Gastrocnemius medialis (tissue), 4 donors: ENCODE measurements at regions of chr12 and their contacts with region 1.

Region 1: GRCh38 chr12:123232807-123233543 is at the starts of genes MPHOSPH9 and MTRFR:
- DNase-seq: peak; percentile 100
- ATAC-seq: peak; percentile 96
- H3K4me3 ChIP-seq: peak within 1 kb of the TSS; percentile 88 to 96 (median 92)
- H3K27ac ChIP-seq: peak within 1 kb of the TSS; percentile 95 to 99 (median 97)
- H3K4me1 ChIP-seq: peaks cover 25 to 30% of the 10 kb centered on the region in 2 donors
- H3K27me3 ChIP-seq: no peaks in the 10 kb centered on the region
- CTCF ChIP-seq: peak in 1 of 5 experiments; percentile 10
- POLR2A ChIP-seq: peak; percentile 99 to 100
- total RNA-seq, gene MPHOSPH9: 8.5 to 35.4 (median 12.7) TPM
- total RNA-seq, gene MTRFR: 4.7 to 14.1 (median 5.6) TPM

Region 2: DNA sequence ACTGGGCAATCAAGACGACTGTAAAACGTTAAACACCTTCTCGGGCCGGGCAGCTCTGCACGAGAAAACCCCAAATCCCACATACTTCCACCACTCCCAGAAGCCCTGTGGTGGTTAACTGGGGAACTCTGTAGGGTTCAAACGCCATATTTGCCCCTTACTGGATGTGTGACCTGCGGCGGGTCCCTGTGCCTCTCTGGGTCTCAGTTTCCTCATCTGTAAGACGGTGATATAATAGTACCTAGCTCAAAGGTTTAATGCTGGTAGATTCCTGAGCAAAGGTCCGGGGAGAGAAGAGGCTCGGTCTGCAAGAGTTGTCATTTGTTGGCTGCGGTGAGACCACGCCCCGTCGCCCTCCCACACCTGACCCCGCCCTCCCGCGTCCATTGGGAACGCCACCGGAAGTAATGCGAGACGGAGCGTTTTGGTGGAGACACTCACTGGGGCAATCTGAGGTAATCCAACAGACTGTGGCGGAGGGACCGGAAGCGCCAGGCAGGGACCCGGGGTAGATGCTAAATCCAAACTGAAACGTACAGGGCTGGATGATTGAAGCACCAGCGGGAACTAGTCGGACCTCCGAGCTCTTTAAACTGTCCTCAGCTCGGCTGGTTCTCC is 258.6 kb before region 1 on chr12:
- in situ Hi-C with region 1: loop called in 1 of 4 experiments (anchors 10 kb)
- intact Hi-C with region 1: loop called (anchors 2 kb)
- DNase-seq: peak; percentile 97
- ATAC-seq: peak; percentile 97 to 98
- H3K4me3 ChIP-seq: peak overlapping the region; percentile 85 to 100 (median 91)
- H3K27ac ChIP-seq: peak overlapping the region; percentile 96 to 100 (median 98)
- H3K4me1 ChIP-seq: peaks cover 24 to 37% of the 10 kb centered on the region in 2 donors
- H3K27me3 ChIP-seq: no peaks in the 10 kb centered on the region
- CTCF ChIP-seq: peak in 1 of 5 experiments; percentile 12
- POLR2A ChIP-seq: no peak

Region 3: GRCh38 chr12:122980183-122981046 is 252.6 kb before region 1 on chr12 and contains the start of gene ARL6IP4:
- in situ Hi-C with region 1: loop called in 1 of 4 experiments (anchors 10 kb)
- intact Hi-C with region 1: loop called (anchors 1 kb)
- DNase-seq: no peak
- ATAC-seq: peak; percentile 71 to 72
- H3K4me3 ChIP-seq: peak within 1 kb of the TSS; percentile 83 to 97 (median 92)
- H3K27ac ChIP-seq: peak within 1 kb of the TSS; percentile 79 to 91 (median 91)
- H3K4me1 ChIP-seq: peaks cover 50 to 74% of the 10 kb centered on the region in 2 donors
- H3K27me3 ChIP-seq: no peaks in the 10 kb centered on the region
- CTCF ChIP-seq: peak in 2 of 5 experiments; percentile 12 to 17
- POLR2A ChIP-seq: peak; percentile 80 to 86
- total RNA-seq, gene ARL6IP4: 123 to 175 (median 156) TPM

Region 4: DNA sequence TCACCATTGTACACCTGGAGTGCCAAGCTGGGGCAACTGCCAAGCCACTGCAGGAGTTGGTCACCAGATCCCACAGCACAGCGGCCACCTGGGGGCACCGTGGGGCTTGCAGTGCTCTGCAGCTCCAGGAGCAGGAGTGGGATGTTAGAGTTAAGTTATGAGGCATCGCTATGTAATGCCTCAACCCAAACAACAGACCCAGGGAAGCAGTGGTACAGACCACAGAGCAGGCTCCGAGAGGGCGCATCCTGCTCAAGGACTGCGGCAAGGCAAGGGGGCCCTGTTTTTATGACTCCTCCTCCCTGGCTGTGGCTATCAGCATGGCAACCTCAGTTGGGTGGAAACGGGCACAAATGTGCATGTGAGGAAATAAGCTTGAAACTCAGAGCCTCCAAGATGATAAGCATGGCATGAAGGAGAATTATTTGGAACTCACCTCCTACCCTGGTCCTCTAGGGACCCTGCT is 189.4 kb before region 1 on chr12:
- in situ Hi-C with region 1: loop called in 1 of 4 experiments (anchors 10 kb)
- intact Hi-C with region 1: loop called (anchors 2 kb)
- DNase-seq: peak; percentile 75 to 86
- ATAC-seq: peak; percentile 85 to 94
- H3K4me3 ChIP-seq: no peak overlapping the region
- H3K27ac ChIP-seq: peak overlapping the region in 1 of 4 donors; percentile 19
- H3K4me1 ChIP-seq: peaks cover 11 to 16% of the 10 kb centered on the region in 2 donors
- H3K27me3 ChIP-seq: no peaks in the 10 kb centered on the region
- CTCF ChIP-seq: peak; percentile 54 to 87 (median 73)
- POLR2A ChIP-seq: no peak

Region 5: DNA sequence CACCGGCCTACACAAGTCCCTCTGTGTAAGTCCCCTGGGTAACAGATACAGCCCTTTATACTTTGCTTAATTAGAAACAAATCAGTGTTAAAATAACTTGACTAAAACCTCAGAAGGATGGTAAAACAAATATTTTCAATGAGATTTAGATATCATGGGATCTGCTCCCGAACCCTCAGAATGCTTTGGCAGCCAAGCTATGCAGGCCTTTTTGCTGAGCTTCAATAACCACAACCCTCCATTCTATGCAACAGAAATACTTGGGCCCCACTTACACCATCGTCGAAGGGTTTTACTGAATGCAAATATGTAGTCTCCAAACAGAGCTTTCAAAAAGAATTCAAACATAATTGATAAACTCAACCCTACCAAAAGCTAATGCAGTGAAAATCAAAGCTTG is 52.8 kb before region 1 on chr12:
- in situ Hi-C with region 1: no loop called
- intact Hi-C with region 1: no loop called
- DNase-seq: no peak
- ATAC-seq: no peak
- H3K4me3 ChIP-seq: no peak overlapping the region
- H3K27ac ChIP-seq: no peak overlapping the region
- H3K4me1 ChIP-seq: no peaks in the 10 kb centered on the region
- H3K27me3 ChIP-seq: no peaks in the 10 kb centered on the region
- CTCF ChIP-seq: no peak
- POLR2A ChIP-seq: no peak

Region 6: DNA sequence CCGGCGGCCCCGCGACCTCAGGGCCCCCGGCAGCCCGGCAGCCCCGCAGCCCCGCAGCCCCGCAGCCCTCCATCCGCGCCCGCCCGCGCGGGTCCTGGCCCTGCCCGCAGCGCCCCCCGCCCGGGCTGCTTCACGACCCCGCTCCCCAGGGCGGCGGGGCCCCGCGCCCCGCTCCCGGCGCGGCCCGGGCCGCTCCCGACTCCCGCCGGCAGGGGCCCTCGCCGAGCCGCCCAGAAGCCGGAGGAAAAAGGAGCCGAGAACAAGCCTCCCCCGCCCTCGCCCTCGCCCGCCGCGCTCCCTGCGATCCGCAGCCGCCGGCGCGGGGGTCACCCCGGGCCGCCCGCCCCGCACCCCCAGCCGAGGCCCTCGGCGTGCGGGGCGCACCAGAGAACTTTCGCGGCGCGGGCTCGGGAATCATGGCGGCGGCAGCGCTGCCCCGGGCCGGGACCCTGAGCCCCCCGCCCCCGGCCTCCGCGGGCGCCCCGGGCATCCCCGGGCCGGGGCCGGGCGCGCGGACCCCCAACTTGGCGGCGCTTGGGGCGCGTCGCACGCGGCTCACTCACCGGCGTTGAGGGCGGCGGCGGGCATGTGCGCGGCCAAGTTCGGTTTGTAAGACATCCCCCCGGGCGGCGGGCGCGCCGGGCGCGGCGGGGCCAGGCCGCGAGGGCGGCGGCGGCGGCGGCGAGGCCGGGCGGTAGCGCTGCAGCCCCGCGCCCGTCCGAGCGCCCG is 38.2 kb after region 1 on chr12:
- in situ Hi-C with region 1: no loop called
- intact Hi-C with region 1: loop called (anchors 2 kb)
- DNase-seq: peak; percentile 56 to 65
- ATAC-seq: peak; percentile 77 to 85
- H3K4me3 ChIP-seq: peak overlapping the region; percentile 60 to 71 (median 68)
- H3K27ac ChIP-seq: peak overlapping the region; percentile 44 to 78 (median 52)
- H3K4me1 ChIP-seq: peaks cover 30 to 36% of the 10 kb centered on the region in 2 donors
- H3K27me3 ChIP-seq: no peaks in the 10 kb centered on the region
- CTCF ChIP-seq: peak in 4 of 5 experiments; percentile 69 to 80 (median 78)
- POLR2A ChIP-seq: no peak

Region 7: DNA sequence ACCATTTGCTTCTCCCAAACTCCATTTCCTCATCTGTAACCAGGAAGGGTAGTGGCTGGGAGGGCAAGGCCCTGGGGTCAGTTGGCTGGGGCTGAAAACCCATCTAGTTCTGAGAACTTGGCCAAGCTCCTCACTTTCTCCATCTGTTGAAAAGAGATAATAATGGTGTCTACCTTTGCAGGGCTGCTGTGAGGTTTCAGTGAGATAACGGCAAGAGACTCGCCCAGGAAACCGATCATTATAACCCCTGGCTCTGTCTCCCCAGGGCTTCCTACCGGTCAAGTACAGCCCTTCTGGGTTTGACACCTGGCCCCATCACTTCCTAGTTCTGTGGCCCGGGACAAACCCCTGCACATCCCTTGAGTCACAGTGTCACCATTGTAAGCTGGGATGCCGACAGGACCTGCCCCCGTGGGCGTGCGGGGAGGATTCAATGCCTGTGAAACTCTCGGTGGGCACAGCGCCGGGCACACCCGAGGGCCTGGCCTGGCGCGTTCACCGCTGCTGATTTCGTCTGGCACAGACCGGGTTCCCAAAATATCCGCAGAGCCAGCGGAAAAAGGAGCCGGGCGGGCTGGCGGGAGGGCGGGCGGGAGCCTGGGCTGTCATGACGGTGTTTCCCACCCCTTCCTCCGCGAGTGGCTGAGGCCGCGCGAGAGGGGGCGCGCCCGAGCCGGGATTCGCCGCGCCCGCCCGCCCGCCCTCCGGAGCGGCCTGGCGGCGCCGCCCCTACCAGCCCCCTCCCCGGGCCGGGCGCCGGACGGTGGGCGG is 155.4 kb after region 1 on chr12:
- in situ Hi-C with region 1: no loop called
- intact Hi-C with region 1: loop called (anchors 5 kb)
- DNase-seq: peak; percentile 63 to 77
- ATAC-seq: peak; percentile 57 to 61
- H3K4me3 ChIP-seq: peak overlapping the region; percentile 63 to 74 (median 66)
- H3K27ac ChIP-seq: peak overlapping the region; percentile 86 to 96 (median 94)
- H3K4me1 ChIP-seq: peaks cover 46 to 51% of the 10 kb centered on the region in 2 donors
- H3K27me3 ChIP-seq: no peaks in the 10 kb centered on the region
- CTCF ChIP-seq: no peak
- POLR2A ChIP-seq: peak in 1 of 2 donors; percentile 8